IMR-90 (cell line): ENCODE measurements at regions of chr2 and their contacts with region 1.

Region 1: GRCh38 chr2:219912491-219912921 is 285.1 kb downstream of the SLC4A3 start:
- DNase-seq: peak; percentile 62
- ATAC-seq: peak; percentile 96
- H3K4me3 ChIP-seq: no peak overlapping the region; the same call in 1 of the 2 replicates
- H3K27ac ChIP-seq: peak overlapping the region; percentile 51; the same call in 1 of the 2 replicates
- H3K4me1 ChIP-seq: peaks cover 2% of the 10 kb centered on the region; the same call in 1 of the 2 replicates
- H3K27me3 ChIP-seq: no peaks in the 10 kb centered on the region
- CTCF ChIP-seq: peak; percentile 34
- POLR2A ChIP-seq: no peak
- RAD21 ChIP-seq: 0 out of 2 replicates have a peak, but pooled peaks have one; percentile 9

Region 2: GRCh38 chr2:219947575-219947974 is 35.1 kb after region 1 on chr2:
- CTCF ChIA-PET with region 1: no interaction called
- POLR2A ChIA-PET with region 1: interaction called, 12 read pairs
- dilution Hi-C with region 1: no loop called
- in situ Hi-C with region 1: no loop called
- intact Hi-C with region 1: no loop called
- DNase-seq: peak; percentile 55
- ATAC-seq: peak; percentile 59
- H3K4me3 ChIP-seq: no peak overlapping the region
- H3K27ac ChIP-seq: no peak overlapping the region
- H3K4me1 ChIP-seq: peaks cover 2% of the 10 kb centered on the region; the same call in 1 of the 2 replicates
- H3K27me3 ChIP-seq: no peaks in the 10 kb centered on the region; the same call in 1 of the 2 replicates
- CTCF ChIP-seq: no peak
- POLR2A ChIP-seq: no peak
- RAD21 ChIP-seq: no peak

Region 3: DNA sequence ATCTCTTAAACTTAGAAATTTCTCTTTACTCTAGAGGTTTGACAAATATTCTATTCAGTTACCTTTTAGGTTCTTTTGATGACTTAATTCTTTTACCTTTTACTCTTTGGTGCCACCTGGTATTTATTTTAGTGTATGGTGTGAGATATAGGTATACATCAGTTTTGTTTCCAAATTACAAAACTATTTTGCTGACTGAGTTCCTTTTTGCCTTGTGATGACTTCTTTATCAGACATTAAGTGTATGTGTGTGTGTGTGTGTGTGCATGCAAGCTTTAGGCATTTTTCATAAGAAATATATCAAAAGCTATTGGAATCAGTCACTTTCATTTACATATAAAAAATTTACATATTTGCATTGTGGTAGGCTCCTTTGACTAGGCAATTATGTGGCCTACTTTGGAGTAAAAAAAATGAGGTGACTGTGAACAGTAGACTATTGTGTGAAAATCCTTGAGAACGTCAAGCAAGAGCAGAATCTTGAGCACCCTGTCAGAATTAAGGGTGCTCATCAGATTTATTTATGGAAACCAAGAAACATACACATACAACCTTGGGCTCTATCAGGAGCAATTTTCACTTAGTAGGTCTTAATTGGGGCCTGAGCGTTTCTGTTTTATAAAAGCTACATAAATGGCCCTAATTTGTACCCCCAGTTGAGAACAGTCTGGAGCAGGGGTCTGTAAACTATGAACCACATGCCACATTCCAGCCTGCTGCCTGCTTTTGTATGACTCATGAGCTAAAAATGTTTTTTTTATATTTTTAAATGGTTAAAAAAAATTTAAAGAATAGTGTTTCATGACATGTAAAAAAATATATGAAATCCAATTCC is 130.9 kb after region 1 on chr2:
- CTCF ChIA-PET with region 1: no interaction called
- POLR2A ChIA-PET with region 1: no interaction called
- dilution Hi-C with region 1: no loop called
- in situ Hi-C with region 1: no loop called
- intact Hi-C with region 1: loop called (anchors 10 kb)
- DNase-seq: peak; percentile 51
- ATAC-seq: peak; percentile 79
- H3K4me3 ChIP-seq: no peak overlapping the region
- H3K27ac ChIP-seq: no peak overlapping the region
- H3K4me1 ChIP-seq: peaks cover 5% of the 10 kb centered on the region
- H3K27me3 ChIP-seq: no peaks in the 10 kb centered on the region
- CTCF ChIP-seq: no peak
- POLR2A ChIP-seq: no peak
- RAD21 ChIP-seq: no peak

Region 4: GRCh38 chr2:220858101-220858500 is 945.6 kb after region 1 on chr2:
- CTCF ChIA-PET with region 1: no interaction called
- POLR2A ChIA-PET with region 1: no interaction called
- dilution Hi-C with region 1: no loop called
- in situ Hi-C with region 1: no loop called
- intact Hi-C with region 1: no loop called
- DNase-seq: no peak
- ATAC-seq: no peak
- H3K4me3 ChIP-seq: no peak overlapping the region
- H3K27ac ChIP-seq: no peak overlapping the region
- H3K4me1 ChIP-seq: 0 out of 2 replicates have a peak, but pooled peaks cover 2% of the 10 kb centered on the region
- H3K27me3 ChIP-seq: no peaks in the 10 kb centered on the region
- CTCF ChIP-seq: no peak
- POLR2A ChIP-seq: no peak
- RAD21 ChIP-seq: no peak